Endothelial cell of umbilical vein (primary cell): ENCODE measurements at regions of chr6 and their contacts with region 1.

Region 1: GRCh38 chr6:116371120-116371917 is 572 bp downstream of the DSE start:
- DNase-seq: peak; percentile 83
- H3K4me3 ChIP-seq: peak overlapping the region; percentile 71 to 82 (median 81)
- H3K27ac ChIP-seq: peak overlapping the region; percentile 32
- H3K4me1 ChIP-seq: peaks cover 6% of the 10 kb centered on the region
- H3K27me3 ChIP-seq: no peaks in the 10 kb centered on the region
- CTCF ChIP-seq: no peak
- POLR2A ChIP-seq: no peak

Region 2: DNA sequence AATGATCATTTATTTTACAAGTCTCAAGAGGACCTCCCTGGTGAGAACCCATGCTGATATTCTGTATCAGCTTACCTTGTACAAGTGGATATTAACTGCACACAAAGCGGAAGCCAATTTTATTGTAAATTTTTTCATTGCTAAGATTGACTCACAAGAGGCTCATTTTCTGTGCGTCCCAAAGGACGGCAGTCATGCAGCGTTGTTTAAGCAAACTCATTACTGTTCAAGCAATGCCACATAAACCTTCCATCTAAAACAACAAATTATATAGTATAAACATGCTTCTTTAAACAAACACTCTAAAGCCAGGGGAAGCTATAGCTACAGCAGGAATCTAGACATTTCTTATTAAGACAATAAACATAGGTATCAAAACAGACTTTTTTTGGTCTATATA is 885.9 kb before region 1 on chr6:
- CTCF ChIA-PET with region 1: no interaction called
- POLR2A ChIA-PET with region 1: no interaction called
- dilution Hi-C with region 1: no loop called
- intact Hi-C with region 1: no loop called
- DNase-seq: no peak
- H3K4me3 ChIP-seq: no peak overlapping the region
- H3K27ac ChIP-seq: no peak overlapping the region
- H3K4me1 ChIP-seq: no peaks in the 10 kb centered on the region
- H3K27me3 ChIP-seq: no peaks in the 10 kb centered on the region
- CTCF ChIP-seq: no peak
- POLR2A ChIP-seq: no peak

Region 3: GRCh38 chr6:116111552-116112528 is 259.5 kb before region 1 on chr6:
- CTCF ChIA-PET with region 1: no interaction called
- POLR2A ChIA-PET with region 1: no interaction called
- dilution Hi-C with region 1: no loop called
- intact Hi-C with region 1: no loop called
- DNase-seq: peak; percentile 46
- H3K4me3 ChIP-seq: no peak overlapping the region
- H3K27ac ChIP-seq: no peak overlapping the region
- H3K4me1 ChIP-seq: no peaks in the 10 kb centered on the region
- H3K27me3 ChIP-seq: no peaks in the 10 kb centered on the region
- CTCF ChIP-seq: peak; percentile 56 to 69
- POLR2A ChIP-seq: no peak

Region 4: GRCh38 chr6:116328528-116328903 is 42.8 kb before region 1 on chr6:
- CTCF ChIA-PET with region 1: interaction called, 4 read pairs
- POLR2A ChIA-PET with region 1: no interaction called
- dilution Hi-C with region 1: no loop called
- intact Hi-C with region 1: loop called (anchors 2 kb)
- DNase-seq: no peak
- H3K4me3 ChIP-seq: no peak overlapping the region
- H3K27ac ChIP-seq: peak overlapping the region; percentile 75
- H3K4me1 ChIP-seq: peaks cover 16% of the 10 kb centered on the region
- H3K27me3 ChIP-seq: no peaks in the 10 kb centered on the region
- CTCF ChIP-seq: no peak
- POLR2A ChIP-seq: no peak

Region 5: DNA sequence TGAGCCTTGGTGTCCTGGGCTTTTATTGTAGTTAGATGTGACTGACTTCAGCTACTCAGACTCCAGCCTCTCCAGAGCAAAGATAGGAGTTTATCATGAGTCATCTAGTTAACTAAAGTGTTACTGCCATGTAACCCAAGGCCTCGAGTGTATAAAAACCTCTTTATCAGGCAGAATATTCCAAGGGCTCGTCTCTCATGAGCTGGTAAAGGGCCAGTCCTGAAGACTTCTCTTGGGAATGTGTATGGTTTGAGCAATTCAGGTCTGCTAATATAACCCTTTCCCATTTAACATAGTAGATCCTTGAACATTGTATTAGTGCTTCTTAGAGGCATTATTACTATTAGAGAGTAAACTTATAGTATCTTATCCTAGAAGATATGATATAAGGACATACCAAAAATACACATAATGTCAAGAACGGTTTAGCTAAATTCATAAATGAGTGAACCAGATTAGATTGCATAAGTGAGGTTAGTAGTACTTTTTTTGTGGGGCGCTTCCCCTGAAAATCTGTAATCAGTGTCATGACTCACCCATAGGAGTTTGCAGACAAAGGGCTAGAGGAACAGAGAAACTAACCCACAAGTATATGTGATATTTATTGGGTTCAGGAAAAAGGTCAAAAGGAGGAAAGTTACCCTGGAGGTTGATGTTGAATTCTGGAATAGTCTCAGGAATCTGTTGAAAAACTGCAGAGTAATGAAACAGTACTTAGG is 15.4 kb after region 1 on chr6:
- CTCF ChIA-PET with region 1: interaction called, 3 read pairs
- POLR2A ChIA-PET with region 1: interaction called, 3 read pairs
- dilution Hi-C with region 1: no loop called
- intact Hi-C with region 1: loop called (anchors 1 kb)
- DNase-seq: peak; percentile 17
- H3K4me3 ChIP-seq: no peak overlapping the region
- H3K27ac ChIP-seq: no peak overlapping the region
- H3K4me1 ChIP-seq: peaks cover 30% of the 10 kb centered on the region
- H3K27me3 ChIP-seq: no peaks in the 10 kb centered on the region
- CTCF ChIP-seq: no peak
- POLR2A ChIP-seq: no peak

Region 6: DNA sequence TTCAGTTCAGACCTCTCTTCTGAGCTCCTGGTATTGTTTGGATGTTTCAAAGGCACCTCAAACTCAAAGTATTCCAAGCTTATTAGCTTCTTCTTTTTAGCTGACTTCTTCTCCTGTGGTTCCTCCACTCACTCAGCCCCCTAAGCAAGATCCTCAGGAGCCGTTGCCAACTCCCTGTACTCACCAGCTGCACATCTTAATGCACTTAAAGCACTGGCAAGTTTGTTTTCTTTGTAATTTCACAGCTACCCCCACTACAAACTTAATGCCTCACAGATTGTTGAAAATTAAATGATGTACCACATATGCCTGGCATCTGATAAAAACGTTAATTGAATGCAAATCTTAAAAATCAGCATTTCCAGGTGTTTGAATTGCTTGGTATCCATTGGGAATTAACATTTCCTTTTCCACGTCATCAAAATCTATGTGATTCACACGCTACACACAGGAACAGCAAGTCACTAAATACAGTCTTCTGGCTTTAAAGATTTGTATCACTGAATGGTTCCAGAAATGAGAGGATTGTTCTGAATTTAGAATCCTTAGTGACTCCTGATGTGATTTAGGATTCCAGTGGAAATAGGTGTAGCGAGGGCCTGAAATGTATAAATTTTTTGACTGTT is 114.4 kb after region 1 on chr6:
- CTCF ChIA-PET with region 1: no interaction called
- POLR2A ChIA-PET with region 1: no interaction called
- dilution Hi-C with region 1: no loop called
- intact Hi-C with region 1: no loop called
- DNase-seq: no peak
- H3K4me3 ChIP-seq: no peak overlapping the region
- H3K27ac ChIP-seq: no peak overlapping the region
- H3K4me1 ChIP-seq: no peaks in the 10 kb centered on the region
- H3K27me3 ChIP-seq: peaks cover 5 to 12% of the 10 kb centered on the region in 2 experiments
- CTCF ChIP-seq: no peak
- POLR2A ChIP-seq: no peak

Region 7: GRCh38 chr6:116531675-116532570 is 160.6 kb after region 1 on chr6:
- CTCF ChIA-PET with region 1: no interaction called
- POLR2A ChIA-PET with region 1: no interaction called
- dilution Hi-C with region 1: no loop called
- intact Hi-C with region 1: loop called (anchors 2 kb)
- DNase-seq: peak; percentile 86
- H3K4me3 ChIP-seq: no peak overlapping the region
- H3K27ac ChIP-seq: no peak overlapping the region
- H3K4me1 ChIP-seq: peaks cover 16% of the 10 kb centered on the region
- H3K27me3 ChIP-seq: peaks cover 0 to 2% of the 10 kb centered on the region in 2 experiments
- CTCF ChIP-seq: peak; percentile 59 to 74
- POLR2A ChIP-seq: no peak

Region 8: DNA sequence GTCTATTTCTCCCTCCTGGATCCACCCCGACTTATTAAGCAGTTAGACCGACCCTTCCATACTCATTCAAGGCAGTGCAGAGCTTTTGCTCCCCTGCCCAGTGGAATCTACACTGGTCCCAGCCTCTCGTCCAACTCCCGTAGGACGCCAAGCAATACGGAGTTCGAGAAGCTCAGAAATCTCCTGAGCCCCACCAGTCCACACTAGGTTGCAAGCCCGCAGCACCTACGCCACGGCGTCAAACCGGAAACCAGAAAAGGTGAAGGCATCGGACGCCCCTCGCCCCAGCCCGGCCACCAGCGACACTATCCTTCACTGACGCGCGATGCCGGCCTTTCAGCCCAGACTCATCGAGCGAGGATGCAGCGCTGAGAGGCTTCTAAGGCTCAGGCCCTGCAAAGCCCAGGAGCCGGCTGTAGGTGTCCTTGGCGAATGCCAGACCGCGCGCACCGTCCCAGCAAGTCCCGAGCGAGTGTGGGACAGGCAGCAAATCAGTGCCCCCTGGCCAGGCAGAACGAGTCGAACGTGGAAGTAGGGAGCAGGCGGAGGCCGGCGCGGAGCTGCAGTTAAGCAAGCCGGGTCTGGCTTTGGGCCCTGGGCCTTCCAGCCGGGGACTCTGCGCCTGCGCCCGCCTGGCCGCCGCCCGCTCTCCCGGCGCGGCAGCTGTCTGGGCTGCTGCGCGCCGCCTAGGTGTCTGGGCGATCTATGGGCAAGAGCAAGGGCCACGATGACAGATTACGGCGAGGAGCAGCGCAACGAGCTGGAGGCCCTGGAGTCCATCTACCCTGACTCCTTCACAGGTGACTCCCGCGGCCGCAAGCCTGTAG is 199.8 kb after region 1 on chr6 and contains the start of gene RWDD1:
- CTCF ChIA-PET with region 1: no interaction called
- POLR2A ChIA-PET with region 1: no interaction called
- dilution Hi-C with region 1: no loop called
- intact Hi-C with region 1: loop called (anchors 5 kb)
- DNase-seq: peak; percentile 99
- H3K4me3 ChIP-seq: peak within 1 kb of the TSS; percentile 87 to 98 (median 98)
- H3K27ac ChIP-seq: peak within 1 kb of the TSS; percentile 84
- H3K4me1 ChIP-seq: peaks cover 33% of the 10 kb centered on the region
- H3K27me3 ChIP-seq: no peaks in the 10 kb centered on the region
- CTCF ChIP-seq: no peak
- POLR2A ChIP-seq: peak; percentile 89
- total RNA-seq, gene RWDD1: 37.9 and 44.2 TPM in 2 replicates